ENCODE measurements at regions of chr7 and their contacts with region 1.

Region 1: DNA sequence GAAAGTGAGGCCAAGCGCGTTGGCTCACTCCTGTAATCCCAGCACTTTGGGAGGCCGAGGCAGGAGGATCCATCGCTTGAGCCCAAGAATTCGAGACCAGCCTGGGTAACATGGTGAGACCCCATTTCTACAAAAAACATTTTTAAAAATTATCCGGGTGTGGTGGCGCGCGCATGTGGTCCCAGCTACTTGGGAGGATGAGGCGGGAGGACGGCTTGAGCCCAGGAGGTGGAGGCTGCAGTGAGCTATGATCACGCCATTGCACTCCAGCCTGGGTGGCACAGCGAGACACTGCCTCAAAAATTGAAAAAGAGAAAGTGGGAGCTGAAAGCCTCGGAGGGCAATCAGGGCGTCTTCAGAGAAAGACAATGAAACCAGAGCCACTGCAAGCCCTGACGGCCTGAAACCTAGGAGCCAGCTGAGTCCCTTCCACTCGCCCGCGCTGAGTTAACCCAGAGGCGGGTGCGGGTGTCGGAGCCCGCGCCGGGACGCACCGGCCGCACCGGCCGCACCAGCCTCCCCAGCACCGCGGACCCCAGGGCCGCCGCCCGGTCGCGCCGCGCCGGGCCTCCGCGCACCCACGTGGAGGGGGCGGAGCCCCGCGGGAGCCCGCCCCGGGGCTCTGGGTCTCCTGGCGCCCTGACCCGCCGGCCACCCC is 22.4 kb downstream of the ZFAND2A start:
- DNase-seq: no peak
- H3K4me3 Mint-ChIP-seq: peak overlapping the region; percentile 89
- H3K27ac Mint-ChIP-seq: peak overlapping the region; percentile 81
- H3K4me1 Mint-ChIP-seq: peaks cover 10% of the 10 kb centered on the region
- H3K27me3 Mint-ChIP-seq: no peaks in the 10 kb centered on the region

Region 2: DNA sequence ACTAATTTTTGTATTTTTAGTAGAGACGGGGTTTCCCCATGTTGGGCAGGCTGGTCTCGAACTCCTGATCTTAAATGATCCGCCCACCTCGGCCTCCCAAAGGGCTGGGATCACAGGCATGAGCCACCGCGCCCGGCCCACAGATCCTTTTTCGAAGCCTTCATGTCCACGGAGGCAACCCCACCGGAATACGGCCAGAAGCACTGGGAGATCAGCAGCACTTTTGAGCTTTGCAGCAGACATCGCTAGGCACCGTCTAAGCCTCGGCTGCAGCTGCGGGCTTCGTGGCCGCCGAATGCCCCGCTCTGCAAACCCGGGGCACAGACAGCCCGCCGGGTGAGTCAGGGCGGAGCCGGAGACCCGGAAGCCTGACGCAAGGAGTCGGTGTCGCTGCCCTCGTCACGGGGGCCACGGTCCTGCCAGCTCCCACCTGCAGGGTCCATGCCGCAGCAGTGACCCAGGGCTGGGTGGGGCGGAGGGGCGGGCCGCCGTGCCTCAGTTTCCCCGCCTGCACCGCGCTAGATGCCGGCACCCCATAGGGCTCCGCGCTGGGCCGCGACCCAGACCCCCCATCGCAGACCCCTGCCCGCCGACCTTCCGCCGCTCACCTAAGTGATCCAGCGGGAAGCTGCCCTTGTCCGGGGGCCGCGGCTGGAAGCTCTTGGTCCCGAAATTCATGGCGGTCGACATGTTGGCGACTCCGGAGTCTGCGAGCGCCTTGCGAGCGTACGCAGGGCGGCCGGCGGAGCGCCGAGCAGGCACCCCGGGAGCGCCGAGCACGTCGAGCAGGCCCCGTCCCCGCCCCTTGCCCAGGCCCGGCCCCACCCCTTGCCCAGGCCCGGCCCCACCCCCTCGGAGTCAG is 162.6 kb before region 1 on chr7 and contains the start of gene COX19:
- intact Hi-C with region 1: loop called (anchors 1 kb)
- DNase-seq: peak; percentile 85
- H3K4me3 Mint-ChIP-seq: peak within 1 kb of the TSS; percentile 97
- H3K27ac Mint-ChIP-seq: peak within 1 kb of the TSS; percentile 94
- H3K4me1 Mint-ChIP-seq: peaks cover 5% of the 10 kb centered on the region
- H3K27me3 Mint-ChIP-seq: no peaks in the 10 kb centered on the region
- total RNA-seq, gene COX19: 14.3 and 18.6 TPM in 2 replicates

Region 3: GRCh38 chr7:1086588-1087464 is 50.8 kb before region 1 on chr7:
- intact Hi-C with region 1: loop called (anchors 1 kb)
- DNase-seq: peak; percentile 61
- H3K4me3 Mint-ChIP-seq: peak overlapping the region; percentile 63
- H3K27ac Mint-ChIP-seq: no peak overlapping the region
- H3K4me1 Mint-ChIP-seq: peaks cover 9% of the 10 kb centered on the region
- H3K27me3 Mint-ChIP-seq: peaks cover 2% of the 10 kb centered on the region

Region 4: DNA sequence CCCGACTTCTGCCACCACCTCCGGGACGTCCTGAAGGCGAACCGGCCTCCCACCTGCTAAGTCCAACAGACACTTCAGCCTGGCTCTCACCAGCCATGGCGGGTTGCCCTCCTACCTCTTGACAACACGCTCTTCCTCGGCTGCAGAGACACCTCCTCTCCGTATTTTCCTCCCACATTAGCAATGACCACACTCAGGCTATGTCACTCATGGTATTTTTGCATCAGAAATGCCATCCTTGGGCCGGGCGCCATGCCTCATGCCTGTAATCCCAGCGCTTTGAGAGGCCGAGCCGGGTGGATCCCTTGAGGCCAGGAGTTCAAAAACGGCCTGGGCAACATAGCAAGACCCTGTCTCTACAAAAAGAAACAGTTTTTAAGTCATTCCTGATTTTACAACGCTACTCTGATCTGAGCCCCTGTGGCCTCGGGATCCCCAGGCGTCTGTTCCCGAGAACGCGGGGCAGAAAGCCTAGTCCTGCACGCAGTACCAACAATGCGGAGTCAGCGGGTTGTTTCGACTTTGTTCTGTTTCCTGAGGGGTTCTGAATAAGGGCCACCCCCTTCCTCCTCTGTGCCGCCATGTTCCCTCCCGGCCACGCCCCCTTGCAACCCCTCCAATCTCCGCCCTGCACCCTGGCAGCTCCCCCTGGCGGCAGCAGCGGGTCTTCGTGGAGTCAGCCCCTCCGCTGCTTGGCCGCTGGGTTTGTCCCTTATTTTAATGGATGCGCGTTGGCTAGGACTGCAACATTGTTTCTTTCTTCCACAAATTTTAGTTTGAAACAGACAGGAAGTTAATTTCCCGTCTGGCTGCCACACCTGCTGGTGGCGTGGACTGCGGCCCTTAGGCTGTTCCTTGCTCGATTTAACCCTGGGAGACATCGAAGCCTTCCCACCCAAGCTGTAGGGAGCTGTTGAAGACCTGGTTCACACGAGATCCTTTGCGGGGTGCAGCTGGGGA is 32.0 kb after region 1 on chr7:
- intact Hi-C with region 1: loop called (anchors 5 kb)
- DNase-seq: peak; percentile 85
- H3K4me3 Mint-ChIP-seq: peak overlapping the region; percentile 82
- H3K27ac Mint-ChIP-seq: peak overlapping the region; percentile 79
- H3K4me1 Mint-ChIP-seq: peaks cover 16% of the 10 kb centered on the region
- H3K27me3 Mint-ChIP-seq: no peaks in the 10 kb centered on the region

Region 5: DNA sequence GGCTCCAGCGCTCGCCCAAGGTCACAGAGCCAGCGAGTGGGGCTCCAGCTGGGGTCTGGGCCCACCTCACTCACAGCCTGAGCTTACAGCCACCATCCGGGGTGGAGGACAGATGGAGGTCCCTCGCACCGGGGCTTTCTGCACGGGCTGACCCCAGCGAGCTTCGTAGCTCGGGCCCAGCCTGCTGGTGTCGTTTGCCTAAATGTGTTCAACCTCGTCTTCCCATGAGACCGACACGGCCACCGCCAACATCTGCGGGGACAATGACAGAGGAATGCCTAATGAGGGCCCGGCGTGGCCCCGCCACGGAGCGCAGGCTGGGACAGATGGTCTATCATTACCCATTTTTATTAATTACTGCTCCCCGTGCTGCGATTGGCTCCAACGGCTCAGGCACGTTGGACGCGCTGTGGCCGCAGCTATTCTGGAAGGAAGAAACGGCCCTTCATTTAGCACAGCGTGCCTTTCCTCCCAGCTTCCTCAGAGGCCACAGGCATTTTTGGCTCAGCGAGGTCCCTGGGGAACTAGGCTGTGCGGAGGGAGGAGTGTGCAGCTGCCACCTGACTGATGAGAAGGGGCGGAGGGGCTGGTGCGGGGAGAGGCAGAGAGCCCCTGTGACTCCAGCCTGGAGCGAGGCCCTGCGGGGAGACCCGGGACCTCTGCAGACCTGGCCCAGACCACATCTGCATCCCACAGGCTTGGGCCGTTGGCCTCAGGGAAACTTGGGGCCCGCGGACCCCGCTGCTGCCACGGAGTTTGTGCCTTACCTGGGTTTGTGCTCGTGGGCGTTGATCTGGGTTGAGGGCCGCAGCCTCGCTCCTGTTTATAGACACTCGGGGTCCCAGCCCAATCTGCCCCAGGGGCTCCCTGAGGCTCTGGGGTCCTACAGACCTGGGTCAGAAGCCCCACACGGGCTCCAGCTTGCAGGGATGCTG is 509.6 kb after region 1 on chr7:
- intact Hi-C with region 1: no loop called
- DNase-seq: no peak
- H3K4me3 Mint-ChIP-seq: no peak overlapping the region
- H3K27ac Mint-ChIP-seq: no peak overlapping the region
- H3K4me1 Mint-ChIP-seq: no peaks in the 10 kb centered on the region
- H3K27me3 Mint-ChIP-seq: peaks cover 2% of the 10 kb centered on the region

Region 6: DNA sequence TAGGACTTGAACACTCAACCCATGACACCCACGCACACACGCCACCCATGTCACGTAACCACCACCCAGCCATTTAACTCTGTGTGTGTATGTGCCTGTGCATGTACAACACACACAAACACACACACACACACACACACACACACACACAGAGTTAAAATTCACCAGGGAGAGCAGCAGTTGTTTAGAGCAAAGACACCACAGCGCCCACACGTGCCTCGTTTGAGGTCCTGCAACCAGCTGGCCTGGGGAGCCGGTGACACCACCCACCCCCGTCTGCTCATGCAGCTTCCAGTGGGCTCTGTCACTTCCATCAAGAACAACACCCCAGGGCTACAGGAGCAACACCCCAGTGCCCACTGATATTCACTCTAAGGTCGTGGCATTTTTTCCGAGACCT is 629.9 kb after region 1 on chr7:
- intact Hi-C with region 1: no loop called
- DNase-seq: no peak
- H3K4me3 Mint-ChIP-seq: no peak overlapping the region
- H3K27ac Mint-ChIP-seq: no peak overlapping the region
- H3K4me1 Mint-ChIP-seq: no peaks in the 10 kb centered on the region
- H3K27me3 Mint-ChIP-seq: no peaks in the 10 kb centered on the region

Region 7: GRCh38 chr7:2519119-2519930 is 1381.7 kb after region 1 on chr7 and contains the start of gene LFNG:
- intact Hi-C with region 1: loop called (anchors 5 kb)
- DNase-seq: peak; percentile 84
- H3K4me3 Mint-ChIP-seq: peak within 1 kb of the TSS; percentile 97
- H3K27ac Mint-ChIP-seq: peak within 1 kb of the TSS; percentile 91
- H3K4me1 Mint-ChIP-seq: peaks cover 35% of the 10 kb centered on the region
- H3K27me3 Mint-ChIP-seq: no peaks in the 10 kb centered on the region
- total RNA-seq, gene LFNG: 34.8 and 34.9 TPM in 2 replicates